ENCODE measurements at regions of chr1 and their contacts with region 1.

Region 1: DNA sequence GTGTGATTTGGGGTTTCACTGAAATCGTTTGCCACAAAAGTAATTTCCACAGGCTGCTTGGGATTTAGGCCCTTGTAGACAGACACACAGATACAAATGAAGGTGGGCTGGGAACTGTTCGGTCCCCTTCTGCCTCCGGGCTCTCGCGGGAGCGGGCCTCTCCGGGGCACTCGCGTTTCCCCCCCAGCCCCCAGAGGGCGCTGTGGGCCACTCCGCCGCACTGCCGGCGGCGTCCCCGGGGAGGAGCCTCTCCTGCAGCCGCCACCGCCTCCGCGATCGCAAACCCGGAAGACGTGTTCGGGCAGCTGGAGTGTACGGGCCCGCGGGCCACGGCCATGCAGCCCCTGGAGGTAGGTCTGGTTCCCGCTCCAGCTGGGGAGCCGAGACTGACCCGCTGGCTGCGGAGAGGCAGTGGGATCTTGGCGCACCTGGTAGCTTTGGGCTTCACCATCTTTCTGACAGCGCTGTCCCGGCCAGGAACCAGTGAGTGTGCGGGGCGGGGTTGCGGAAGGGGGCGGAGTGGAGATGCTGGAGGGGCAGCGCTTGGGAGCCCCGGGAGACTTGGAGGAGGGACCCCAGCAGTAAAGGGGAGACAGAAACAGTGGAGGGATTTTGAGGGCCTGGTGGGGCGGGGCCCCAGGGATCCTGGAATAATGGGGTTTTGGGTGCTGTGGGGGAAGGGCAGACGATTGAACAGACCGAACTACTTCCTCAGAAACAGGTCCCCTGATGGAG is at the start of gene CYB561D1:
- DNase-seq: peak; percentile 88 to 96
- H3K4me3 ChIP-seq: peak within 1 kb of the TSS; percentile 80 to 91 (median 84)
- H3K27ac ChIP-seq: peak within 1 kb of the TSS; percentile 76 to 95 (median 87)
- H3K4me1 ChIP-seq: peaks cover 8 to 64% (median 40%) of the 10 kb centered on the region in 4 donors
- H3K27me3 ChIP-seq: no peaks in the 10 kb centered on the region
- CTCF ChIP-seq: peak in 5 of 7 experiments; percentile 72 to 93 (median 90)
- EP300 ChIP-seq: no peak
- POLR2A ChIP-seq: peak in 1 of 4 donors; percentile 13
- total RNA-seq, gene CYB561D1: 1.8 to 6.4 (median 2.3) TPM

Region 2: DNA sequence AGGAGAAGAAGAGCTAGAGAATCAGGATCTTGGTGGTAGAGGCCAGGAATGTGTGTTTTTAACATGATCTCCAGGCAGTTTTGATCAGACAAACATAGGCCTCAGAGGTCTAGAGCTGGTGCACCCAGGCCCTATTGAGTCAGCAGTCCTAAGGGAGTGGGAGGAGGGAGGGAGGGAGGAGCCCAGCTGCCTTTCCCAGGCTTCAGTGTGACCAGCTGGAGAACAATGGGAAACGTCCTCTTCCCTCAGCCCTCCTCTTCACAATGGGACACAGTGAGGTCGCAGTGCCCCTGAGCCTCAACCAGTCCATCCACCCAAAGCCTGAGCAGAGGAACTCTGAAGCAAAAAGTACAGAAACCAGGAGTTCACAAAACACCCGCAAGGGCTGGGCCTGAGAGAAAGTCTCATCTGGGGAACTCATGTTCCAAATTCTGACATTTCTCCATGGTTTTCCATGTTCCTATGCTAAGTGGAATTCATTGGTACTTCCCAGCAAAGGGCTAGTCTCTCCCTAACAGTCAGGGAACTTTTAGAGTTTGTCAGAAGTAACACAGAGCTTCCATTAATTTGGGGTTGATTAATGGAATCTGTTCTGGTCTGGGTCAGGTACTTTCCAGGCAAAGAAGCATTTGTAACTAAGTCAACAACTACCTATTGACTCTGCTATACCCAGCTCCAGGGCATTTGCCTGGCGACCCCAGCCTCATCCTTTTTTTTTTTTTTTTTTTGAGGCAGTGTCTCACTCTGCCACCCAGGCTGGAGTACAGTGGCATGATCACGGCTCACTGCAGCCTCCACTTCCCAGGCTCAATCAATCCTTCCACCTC is 342.6 kb before region 1 on chr1:
- intact Hi-C with region 1: no loop called
- DNase-seq: peak; percentile 67 to 80
- H3K4me3 ChIP-seq: no peak overlapping the region
- H3K27ac ChIP-seq: peak overlapping the region; percentile 73 to 85 (median 80)
- H3K4me1 ChIP-seq: peaks cover 32 to 54% (median 39%) of the 10 kb centered on the region in 4 donors
- H3K27me3 ChIP-seq: no peaks in the 10 kb centered on the region
- CTCF ChIP-seq: no peak
- EP300 ChIP-seq: no peak
- POLR2A ChIP-seq: no peak

Region 3: DNA sequence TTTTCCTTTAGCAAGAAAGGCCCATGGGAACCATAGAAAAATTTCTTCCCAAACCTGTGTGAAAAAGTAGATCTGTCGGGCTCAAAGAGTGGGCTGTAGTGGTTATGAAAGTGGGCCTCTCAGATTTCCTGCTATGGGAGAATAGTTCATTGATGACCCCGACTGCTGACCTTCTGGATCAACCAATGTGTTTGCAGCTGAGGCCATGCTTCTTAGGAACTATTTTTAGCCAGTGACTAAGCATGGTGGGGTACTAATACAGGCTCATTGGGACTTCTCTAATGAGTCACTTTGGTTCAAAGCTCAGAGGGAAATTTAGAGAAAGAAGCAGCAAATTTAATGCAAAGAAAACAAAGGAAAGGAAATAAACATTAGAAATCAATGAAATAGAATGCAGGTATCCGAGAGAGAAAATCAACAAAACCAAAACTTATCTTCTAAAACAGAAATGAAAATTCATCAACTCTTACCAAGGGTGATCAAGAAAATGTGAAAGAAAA is 55.1 kb before region 1 on chr1:
- intact Hi-C with region 1: no loop called
- DNase-seq: peak in 1 of 2 donors; percentile 11
- H3K4me3 ChIP-seq: no peak overlapping the region
- H3K27ac ChIP-seq: no peak overlapping the region
- H3K4me1 ChIP-seq: no peaks in the 10 kb centered on the region
- H3K27me3 ChIP-seq: peaks cover 0 to 19% (median 6%) of the 10 kb centered on the region in 3 donors
- CTCF ChIP-seq: no peak
- EP300 ChIP-seq: no peak
- POLR2A ChIP-seq: no peak

Region 4: GRCh38 chr1:109532365-109533136 is 38.6 kb after region 1 on chr1:
- intact Hi-C with region 1: loop called (anchors 5 kb)
- DNase-seq: peak; percentile 86 to 94
- H3K4me3 ChIP-seq: peak overlapping the region in 3 of 4 donors; percentile 7 to 13 (median 13)
- H3K27ac ChIP-seq: peak overlapping the region in 4 of 5 donors; percentile 13 to 61 (median 42)
- H3K4me1 ChIP-seq: peaks cover 0 to 29% (median 22%) of the 10 kb centered on the region in 4 donors
- H3K27me3 ChIP-seq: no peaks in the 10 kb centered on the region
- CTCF ChIP-seq: peak in 6 of 7 experiments; percentile 64 to 99 (median 97)
- EP300 ChIP-seq: no peak
- POLR2A ChIP-seq: no peak

Measured in stomach (tissue), 19 donors.